BJ (cell line): ENCODE measurements at regions of chr2 and their contacts with region 1.

Region 1: GRCh38 chr2:240840435-240841080 is 20.5 kb upstream of the KIF1A start:
- DNase-seq: no peak
- H3K4me3 ChIP-seq: no peak overlapping the region
- H3K27me3 ChIP-seq: peaks cover 13% of the 10 kb centered on the region
- CTCF ChIP-seq: peak; percentile 78

Region 2: GRCh38 chr2:240513549-240514287 is 326.8 kb before region 1 on chr2:
- CTCF ChIA-PET with region 1: interaction called, 35 read pairs
- POLR2A ChIA-PET with region 1: no interaction called
- DNase-seq: peak; percentile 31
- H3K4me3 ChIP-seq: no peak overlapping the region
- H3K27me3 ChIP-seq: no peaks in the 10 kb centered on the region
- CTCF ChIP-seq: peak; percentile 97

Region 3: DNA sequence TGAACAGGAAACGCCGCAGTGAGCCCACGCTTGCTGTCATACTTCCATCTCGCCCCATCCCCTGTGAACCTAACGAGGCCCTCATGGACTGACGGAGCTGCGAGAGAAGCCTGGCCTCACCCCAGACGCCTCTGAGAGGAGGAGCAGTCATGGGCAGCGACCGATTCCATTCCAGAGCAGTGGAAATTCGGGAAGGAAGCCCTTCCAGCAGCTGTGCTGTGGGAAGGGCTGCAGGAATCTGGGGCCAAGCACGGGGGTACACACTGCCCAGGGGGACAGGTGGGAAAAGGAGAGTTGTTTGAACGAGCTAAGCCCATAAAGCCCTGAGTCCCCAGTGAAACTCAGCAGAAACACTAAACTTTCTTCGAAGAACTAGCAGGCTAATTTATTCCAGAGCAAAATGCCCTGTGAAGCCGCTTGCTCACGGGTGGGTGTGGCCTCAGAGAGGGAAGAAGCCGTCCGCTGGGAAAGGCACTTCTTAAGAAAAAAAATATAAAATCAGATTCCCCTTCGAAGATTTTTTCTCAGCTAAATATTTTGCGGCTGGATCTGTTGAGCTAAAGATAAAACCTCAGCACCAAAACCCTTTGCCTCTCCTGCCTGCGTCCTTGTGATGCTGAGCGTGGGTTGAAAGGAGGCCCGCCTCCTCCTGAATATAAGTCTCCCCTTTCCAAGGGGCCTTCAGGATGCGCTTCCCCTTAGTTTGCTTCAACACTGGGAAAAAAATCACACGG is 321.0 kb before region 1 on chr2:
- CTCF ChIA-PET with region 1: interaction called, 35 read pairs
- POLR2A ChIA-PET with region 1: no interaction called
- DNase-seq: no peak
- H3K4me3 ChIP-seq: peak overlapping the region; percentile 9
- H3K27me3 ChIP-seq: no peaks in the 10 kb centered on the region
- CTCF ChIP-seq: no peak

Region 4: DNA sequence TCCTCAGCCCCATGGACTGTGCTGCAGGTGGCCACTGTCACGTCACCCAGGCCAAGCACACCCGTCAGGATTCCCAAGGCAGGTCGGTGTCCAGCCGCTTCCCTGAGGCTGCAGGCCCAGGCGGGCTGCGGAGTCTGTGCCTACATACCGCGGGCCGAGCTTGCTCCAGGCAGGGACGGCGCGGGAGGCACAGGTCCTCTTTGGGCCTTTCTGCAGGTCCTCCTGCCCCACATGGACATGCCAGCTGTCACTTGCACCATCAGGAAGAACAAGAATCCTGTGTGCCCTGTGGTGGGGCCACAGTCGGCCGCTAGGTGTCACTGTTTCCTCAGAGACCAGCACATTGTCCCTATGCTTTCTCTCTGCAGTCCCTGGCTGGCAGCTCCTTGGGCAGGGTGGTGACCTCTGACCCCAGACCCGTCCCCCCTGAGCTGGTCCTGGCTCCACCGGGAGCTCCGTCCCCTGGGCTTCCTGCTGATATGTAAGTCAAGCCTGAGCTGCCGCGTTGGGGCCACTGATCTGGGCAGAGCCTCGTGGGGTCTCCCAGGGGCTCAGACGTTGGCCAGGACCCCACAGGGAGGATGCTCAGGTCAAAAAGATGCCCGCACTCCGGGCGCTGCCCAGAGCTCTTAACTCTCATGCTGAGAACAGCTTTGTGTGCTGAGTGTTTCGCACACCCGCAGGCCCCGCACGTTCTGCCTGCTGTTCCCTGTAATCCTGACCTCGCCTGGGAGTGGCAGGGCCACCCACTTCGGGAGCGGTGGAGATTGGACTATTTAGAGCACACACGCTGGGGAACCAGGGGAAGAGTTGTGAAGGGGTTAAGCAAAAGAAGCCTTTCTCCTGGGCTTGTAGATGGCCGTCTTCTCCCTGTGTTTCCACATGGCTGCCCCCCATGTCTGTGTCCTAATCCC is 10.8 kb after region 1 on chr2:
- CTCF ChIA-PET with region 1: interaction called, 20 read pairs
- POLR2A ChIA-PET with region 1: no interaction called
- DNase-seq: no peak
- H3K4me3 ChIP-seq: no peak overlapping the region
- H3K27me3 ChIP-seq: no peaks in the 10 kb centered on the region
- CTCF ChIP-seq: peak; percentile 94

Region 5: DNA sequence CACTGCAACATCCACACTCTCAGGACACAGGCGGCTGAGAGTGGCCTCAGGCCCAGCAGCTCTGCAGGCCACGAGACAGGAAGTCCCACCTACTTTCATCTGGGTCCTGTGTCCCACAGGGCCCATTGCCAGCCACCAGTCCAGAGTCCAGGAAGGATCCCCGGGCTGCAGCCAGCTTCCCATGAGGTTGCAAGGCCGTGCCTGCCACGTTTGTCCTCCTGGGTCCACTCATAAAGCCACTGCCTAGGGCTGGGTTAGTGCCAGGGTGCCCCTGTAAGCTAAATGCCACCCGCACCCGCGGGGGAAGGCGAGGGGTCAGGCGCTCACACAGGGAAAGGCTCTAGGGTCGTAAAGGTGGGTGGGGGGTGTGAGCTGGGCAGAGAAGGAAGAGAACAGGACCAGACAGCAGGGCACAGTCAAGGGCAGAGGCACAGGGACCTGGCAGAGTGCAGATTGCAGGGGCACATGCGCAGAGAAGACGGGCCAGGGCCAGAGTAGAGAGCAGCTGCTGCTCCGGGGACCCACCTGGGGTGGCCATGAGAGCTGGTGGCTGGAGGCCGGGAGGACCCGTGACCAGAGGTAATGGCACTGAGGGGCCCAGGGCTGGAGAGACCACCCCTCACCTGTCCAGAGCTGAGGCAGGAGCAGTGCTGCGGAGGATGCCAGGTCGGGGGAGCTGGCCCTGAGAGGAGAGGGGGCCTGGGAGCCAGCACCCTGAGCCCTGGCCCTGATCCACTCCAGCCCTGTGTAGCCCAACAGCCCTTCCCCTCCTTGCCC is 36.1 kb after region 1 on chr2:
- CTCF ChIA-PET with region 1: no interaction called
- POLR2A ChIA-PET with region 1: interaction called, 15 read pairs
- DNase-seq: no peak
- H3K4me3 ChIP-seq: no peak overlapping the region
- H3K27me3 ChIP-seq: no peaks in the 10 kb centered on the region
- CTCF ChIP-seq: no peak

Region 6: GRCh38 chr2:240974771-240975572 is 134.4 kb after region 1 on chr2:
- CTCF ChIA-PET with region 1: no interaction called
- POLR2A ChIA-PET with region 1: no interaction called
- DNase-seq: no peak
- H3K4me3 ChIP-seq: no peak overlapping the region
- H3K27me3 ChIP-seq: peaks cover 5% of the 10 kb centered on the region
- CTCF ChIP-seq: no peak